A673 (cell line): ENCODE measurements at regions of chr12 and their contacts with region 1.

Region 1: DNA sequence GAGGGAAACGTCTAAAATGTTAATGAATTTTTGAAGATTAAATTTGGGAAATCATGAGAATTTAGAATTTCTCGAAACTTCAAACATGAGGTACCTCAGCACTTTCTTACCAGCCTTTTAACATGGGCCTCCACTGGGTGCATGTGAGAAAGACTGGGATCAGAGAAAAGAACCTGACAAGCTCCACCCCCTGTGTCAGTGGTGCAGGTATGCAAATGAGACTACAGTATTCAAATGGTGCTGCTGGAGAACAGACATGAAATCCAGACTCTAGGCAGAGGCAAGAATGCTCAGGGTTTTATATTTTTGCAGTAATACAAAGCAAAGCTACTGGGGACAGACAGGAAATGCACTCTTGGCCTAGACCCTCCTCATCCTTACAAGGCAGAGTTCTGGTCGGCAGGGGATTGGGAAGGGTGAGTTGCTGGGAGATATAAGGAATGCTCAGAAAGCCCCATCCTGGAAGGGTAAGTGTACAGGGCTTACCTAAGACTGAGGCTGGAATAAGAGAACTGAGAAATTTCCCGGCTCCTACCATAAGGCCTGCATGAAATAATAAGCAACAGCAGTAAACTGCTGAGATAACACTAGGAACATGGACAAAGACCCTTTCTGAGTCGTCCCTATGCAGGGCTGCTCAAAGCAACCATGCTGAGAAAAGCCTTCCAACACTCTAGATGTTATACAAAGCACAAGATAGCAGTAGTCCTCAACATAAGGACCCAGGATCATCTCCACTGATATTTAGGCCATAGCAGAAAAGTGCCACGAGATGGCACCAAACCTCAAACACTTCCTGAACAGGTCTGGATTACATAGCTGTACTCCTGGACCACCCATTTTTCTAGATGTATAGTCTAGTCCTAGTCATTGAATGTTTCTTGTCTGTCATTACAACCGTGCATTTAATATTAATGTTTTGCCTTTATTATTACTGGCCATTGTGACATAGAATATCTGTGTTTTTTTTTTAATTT is 260.8 kb downstream of the RASSF9 start:
- DNase-seq: peak; percentile 86
- H3K4me3 ChIP-seq: no peak overlapping the region
- H3K27ac ChIP-seq: no peak overlapping the region
- H3K4me1 ChIP-seq: peaks cover 2% of the 10 kb centered on the region
- H3K27me3 ChIP-seq: no peaks in the 10 kb centered on the region
- CTCF ChIP-seq: peak; percentile 83

Region 2: DNA sequence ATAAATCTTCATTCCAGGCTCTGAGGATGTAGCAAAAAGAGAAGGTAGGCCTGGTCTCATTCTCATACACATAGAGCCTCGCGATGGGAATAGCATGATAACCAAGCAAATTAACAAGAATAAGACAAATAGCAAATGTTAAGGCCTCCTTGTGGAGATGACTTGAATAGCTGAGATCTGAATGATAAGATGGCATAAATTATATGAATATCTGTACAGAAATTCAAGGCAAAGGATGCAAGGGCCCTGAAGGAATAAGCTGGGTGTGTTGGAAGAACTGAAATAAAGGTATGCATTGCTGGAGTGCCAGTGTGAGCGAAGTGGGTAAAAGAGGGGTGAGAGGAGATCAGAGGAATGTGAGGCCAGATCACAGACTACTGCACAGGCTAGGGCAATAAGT is 180.6 kb before region 1 on chr12:
- CTCF ChIA-PET with region 1: no interaction called
- POLR2A ChIA-PET with region 1: no interaction called
- intact Hi-C with region 1: no loop called
- DNase-seq: peak; percentile 24
- H3K4me3 ChIP-seq: no peak overlapping the region
- H3K27ac ChIP-seq: no peak overlapping the region
- H3K4me1 ChIP-seq: peaks cover 30% of the 10 kb centered on the region
- H3K27me3 ChIP-seq: no peaks in the 10 kb centered on the region
- CTCF ChIP-seq: peak; percentile 24; the same call in 1 of the 2 replicates

Region 3: GRCh38 chr12:85468356-85469157 is 106.9 kb before region 1 on chr12:
- CTCF ChIA-PET with region 1: no interaction called
- POLR2A ChIA-PET with region 1: no interaction called
- intact Hi-C with region 1: loop called (anchors 5 kb)
- DNase-seq: peak; percentile 83
- H3K4me3 ChIP-seq: no peak overlapping the region
- H3K27ac ChIP-seq: peak overlapping the region; percentile 6
- H3K4me1 ChIP-seq: peaks cover 44% of the 10 kb centered on the region
- H3K27me3 ChIP-seq: no peaks in the 10 kb centered on the region
- CTCF ChIP-seq: peak; percentile 83

Region 4: DNA sequence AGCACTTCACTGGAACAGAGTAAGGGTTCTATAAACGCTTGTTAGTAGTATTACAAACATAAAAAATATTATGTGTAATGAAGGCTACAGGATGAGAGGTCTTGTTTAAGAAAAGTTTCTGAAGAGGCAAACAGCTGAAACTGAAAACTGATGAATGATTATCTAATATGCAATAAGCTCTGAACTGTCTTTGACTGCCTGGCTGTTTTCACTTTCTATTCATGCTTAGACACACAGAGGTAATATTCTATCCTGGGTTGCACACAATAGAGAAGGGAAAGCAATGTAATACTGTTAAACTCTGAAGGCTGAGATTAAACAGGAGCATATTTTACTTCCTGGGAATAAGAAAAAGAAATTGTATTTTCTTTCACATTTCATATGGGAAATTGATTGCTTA is 44.1 kb before region 1 on chr12:
- CTCF ChIA-PET with region 1: no interaction called
- POLR2A ChIA-PET with region 1: no interaction called
- intact Hi-C with region 1: no loop called
- DNase-seq: no peak
- H3K4me3 ChIP-seq: no peak overlapping the region
- H3K27ac ChIP-seq: no peak overlapping the region
- H3K4me1 ChIP-seq: no peaks in the 10 kb centered on the region
- H3K27me3 ChIP-seq: no peaks in the 10 kb centered on the region
- CTCF ChIP-seq: no peak

Region 5: DNA sequence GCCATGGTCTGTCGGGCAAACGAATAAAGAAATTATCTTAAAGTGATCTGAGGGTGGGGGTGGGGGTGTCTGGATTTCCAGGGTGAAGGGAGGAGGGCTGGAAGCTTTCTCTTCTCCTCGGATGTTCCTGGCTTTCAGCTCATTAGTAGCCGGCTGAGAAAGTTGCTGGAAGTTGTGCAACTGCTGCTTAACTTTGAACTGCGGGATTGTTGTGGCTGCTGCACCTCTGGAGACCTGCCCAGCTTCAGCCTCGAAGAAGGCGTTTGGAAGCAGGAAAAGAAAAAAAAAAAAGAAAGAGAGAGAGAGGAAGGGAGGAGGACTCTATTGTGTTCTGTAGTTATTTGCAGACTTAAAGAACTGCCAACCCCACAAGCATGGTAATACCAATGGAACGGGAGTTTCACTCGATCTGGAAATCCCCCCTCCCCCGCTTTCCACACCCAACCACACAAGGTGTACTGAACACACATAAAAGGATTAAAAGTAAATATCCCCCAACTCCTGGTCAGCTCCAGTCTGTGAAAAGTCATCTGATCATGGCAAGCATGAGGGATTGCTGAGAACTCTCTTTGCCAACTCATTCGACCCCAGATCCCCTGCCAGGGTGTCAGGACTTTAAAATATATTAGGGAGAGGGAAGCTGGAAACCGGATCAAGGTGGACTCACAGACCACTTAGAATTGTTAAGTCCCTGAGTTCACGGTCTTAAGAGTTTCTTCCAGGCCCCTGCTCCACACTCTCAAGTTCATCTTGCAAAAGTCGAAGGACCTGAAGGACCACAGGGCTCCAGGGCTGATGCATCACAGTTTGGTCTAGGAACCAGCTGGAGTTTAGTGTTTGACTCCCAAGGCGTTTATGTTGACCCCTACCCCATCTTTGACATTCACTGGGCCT is 261.0 kb after region 1 on chr12 and contains the start of gene RASSF9:
- CTCF ChIA-PET with region 1: no interaction called
- POLR2A ChIA-PET with region 1: no interaction called
- intact Hi-C with region 1: loop called (anchors 1 kb)
- DNase-seq: peak; percentile 39
- H3K4me3 ChIP-seq: no peak within 1 kb of the TSS
- H3K27ac ChIP-seq: no peak within 1 kb of the TSS
- H3K4me1 ChIP-seq: peaks cover 21% of the 10 kb centered on the region
- H3K27me3 ChIP-seq: no peaks in the 10 kb centered on the region
- CTCF ChIP-seq: no peak
- total RNA-seq, gene RASSF9: 0.09 and 0.19 TPM in 2 replicates